ENCODE measurements at regions of chr12 and their contacts with region 1.

Region 1: GRCh38 chr12:79082595-79082994 is 218.0 kb downstream of the SYT1 start:
- DNase-seq: no peak
- H3K4me3 ChIP-seq: no peak overlapping the region
- H3K27ac ChIP-seq: no peak overlapping the region
- H3K4me1 ChIP-seq: no peaks in the 10 kb centered on the region
- H3K27me3 ChIP-seq: no peaks in the 10 kb centered on the region
- CTCF ChIP-seq: no peak
- POLR2A ChIP-seq: no peak

Region 2: DNA sequence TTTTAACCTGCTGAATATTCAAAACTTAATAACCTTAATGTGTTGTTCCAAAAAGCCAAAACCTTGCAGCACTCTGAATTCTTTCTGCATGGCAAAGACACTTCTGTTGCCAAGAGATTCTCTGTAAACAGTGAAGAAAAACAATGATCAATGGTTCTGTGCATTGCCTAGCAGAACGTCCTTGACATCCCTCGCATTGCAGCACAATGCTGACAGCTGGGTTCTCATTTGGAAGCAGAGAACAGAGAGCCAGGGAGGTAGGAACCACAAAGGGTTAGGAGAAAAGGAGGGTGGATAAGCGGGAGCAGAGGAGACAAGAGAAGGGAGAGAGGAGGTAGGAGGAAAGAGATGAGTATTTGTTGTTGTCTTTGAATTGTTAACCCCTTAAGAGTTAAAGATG is 750.8 kb before region 1 on chr12:
- CTCF ChIA-PET with region 1: no interaction called
- POLR2A ChIA-PET with region 1: no interaction called
- dilution Hi-C with region 1: no loop called
- intact Hi-C with region 1: no loop called
- DNase-seq: no peak
- H3K4me3 ChIP-seq: no peak overlapping the region
- H3K27ac ChIP-seq: no peak overlapping the region
- H3K4me1 ChIP-seq: no peaks in the 10 kb centered on the region
- H3K27me3 ChIP-seq: peaks cover 0 to 2% of the 10 kb centered on the region in 2 experiments
- CTCF ChIP-seq: no peak
- POLR2A ChIP-seq: no peak

Region 3: GRCh38 chr12:78490861-78491260 is 591.7 kb before region 1 on chr12:
- CTCF ChIA-PET with region 1: no interaction called
- POLR2A ChIA-PET with region 1: interaction called, 10 read pairs
- dilution Hi-C with region 1: no loop called
- intact Hi-C with region 1: no loop called
- DNase-seq: no peak
- H3K4me3 ChIP-seq: no peak overlapping the region
- H3K27ac ChIP-seq: no peak overlapping the region
- H3K4me1 ChIP-seq: no peaks in the 10 kb centered on the region
- H3K27me3 ChIP-seq: no peaks in the 10 kb centered on the region
- CTCF ChIP-seq: no peak
- POLR2A ChIP-seq: no peak

Region 4: GRCh38 chr12:78994168-78994791 is 88.3 kb before region 1 on chr12:
- CTCF ChIA-PET with region 1: no interaction called
- POLR2A ChIA-PET with region 1: no interaction called
- dilution Hi-C with region 1: no loop called
- intact Hi-C with region 1: no loop called
- DNase-seq: no peak
- H3K4me3 ChIP-seq: no peak overlapping the region
- H3K27ac ChIP-seq: no peak overlapping the region
- H3K4me1 ChIP-seq: no peaks in the 10 kb centered on the region
- H3K27me3 ChIP-seq: no peaks in the 10 kb centered on the region
- CTCF ChIP-seq: no peak
- POLR2A ChIP-seq: no peak

Region 5: DNA sequence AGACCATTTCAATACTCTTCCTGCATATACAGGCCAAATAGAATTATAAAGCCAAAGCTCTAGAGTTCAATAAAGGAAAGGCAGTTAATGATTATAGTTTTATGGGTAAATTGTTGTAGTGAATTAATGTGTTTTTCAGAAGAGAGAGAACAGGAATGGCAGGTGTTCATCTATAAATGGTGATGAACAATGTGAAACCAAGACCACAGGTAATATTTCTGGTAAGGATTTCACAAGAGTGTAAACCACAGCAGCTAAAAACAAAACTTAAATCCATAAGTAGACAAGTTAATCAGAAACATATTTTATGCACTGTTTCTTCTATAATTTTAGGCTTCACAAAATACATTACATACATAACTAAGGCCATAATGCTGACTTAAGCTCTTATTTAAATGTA is 13.6 kb before region 1 on chr12:
- CTCF ChIA-PET with region 1: no interaction called
- POLR2A ChIA-PET with region 1: no interaction called
- dilution Hi-C with region 1: no loop called
- intact Hi-C with region 1: no loop called
- DNase-seq: no peak
- H3K4me3 ChIP-seq: no peak overlapping the region
- H3K27ac ChIP-seq: no peak overlapping the region
- H3K4me1 ChIP-seq: peaks cover under 1% of the 10 kb centered on the region
- H3K27me3 ChIP-seq: no peaks in the 10 kb centered on the region
- CTCF ChIP-seq: no peak
- POLR2A ChIP-seq: no peak

Region 6: GRCh38 chr12:79402606-79403005 is 320.0 kb after region 1 on chr12:
- CTCF ChIA-PET with region 1: no interaction called
- POLR2A ChIA-PET with region 1: no interaction called
- dilution Hi-C with region 1: no loop called
- intact Hi-C with region 1: no loop called
- DNase-seq: no peak
- H3K4me3 ChIP-seq: no peak overlapping the region
- H3K27ac ChIP-seq: no peak overlapping the region
- H3K4me1 ChIP-seq: peaks cover 5% of the 10 kb centered on the region
- H3K27me3 ChIP-seq: no peaks in the 10 kb centered on the region
- CTCF ChIP-seq: no peak
- POLR2A ChIP-seq: no peak